ENCODE measurements at regions of chr11 and their contacts with region 1.

Region 1: DNA sequence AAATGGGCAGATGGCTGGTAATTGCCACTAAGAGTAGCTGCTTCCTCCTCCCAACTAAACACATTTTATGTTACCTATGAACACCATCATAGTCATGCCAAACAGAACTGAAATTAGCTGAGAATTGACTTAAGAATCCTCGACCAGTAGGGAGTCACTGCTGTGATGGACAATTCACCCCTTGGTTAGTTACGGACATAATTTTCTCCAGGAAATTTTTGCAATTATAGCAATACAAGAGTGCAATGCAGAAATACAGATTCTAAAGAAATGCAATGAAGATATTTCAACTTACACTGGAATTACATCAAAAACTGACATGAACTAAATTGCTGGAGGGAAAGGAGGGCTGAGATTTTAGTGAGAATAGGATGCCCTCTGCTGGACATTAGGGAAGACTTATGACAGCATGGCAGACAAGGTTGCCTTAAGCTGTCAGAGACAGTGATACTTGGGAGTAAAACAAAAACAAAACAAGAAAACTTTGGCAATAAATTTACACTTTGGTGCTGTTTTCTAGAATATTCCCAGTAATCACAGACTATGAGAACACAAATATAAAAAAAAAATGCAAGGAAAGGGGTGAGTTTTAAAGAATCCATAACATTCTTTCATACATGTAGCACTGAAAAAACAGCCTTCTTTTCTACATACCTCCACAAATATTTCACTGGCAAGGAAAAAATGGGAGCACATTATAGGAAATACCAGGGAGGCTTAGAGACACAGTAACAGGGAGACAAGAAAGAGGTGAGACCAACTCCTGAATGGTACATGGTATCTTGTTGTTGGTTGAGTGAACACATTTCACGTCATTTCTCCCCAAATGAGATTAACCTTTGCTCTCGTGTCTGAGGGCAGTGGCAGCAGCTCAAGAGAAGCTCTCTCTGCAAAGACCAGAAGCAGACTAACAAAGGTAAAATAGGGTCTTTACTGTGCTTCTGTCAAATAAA is 11.2 kb upstream of the PPP2R1B start:
- DNase-seq: peak; percentile 79
- H3K4me3 Mint-ChIP-seq: no peak overlapping the region
- H3K27ac Mint-ChIP-seq: no peak overlapping the region
- H3K4me1 Mint-ChIP-seq: no peaks in the 10 kb centered on the region
- H3K27me3 Mint-ChIP-seq: no peaks in the 10 kb centered on the region
- CTCF ChIP-seq: peak; percentile 54

Region 2: DNA sequence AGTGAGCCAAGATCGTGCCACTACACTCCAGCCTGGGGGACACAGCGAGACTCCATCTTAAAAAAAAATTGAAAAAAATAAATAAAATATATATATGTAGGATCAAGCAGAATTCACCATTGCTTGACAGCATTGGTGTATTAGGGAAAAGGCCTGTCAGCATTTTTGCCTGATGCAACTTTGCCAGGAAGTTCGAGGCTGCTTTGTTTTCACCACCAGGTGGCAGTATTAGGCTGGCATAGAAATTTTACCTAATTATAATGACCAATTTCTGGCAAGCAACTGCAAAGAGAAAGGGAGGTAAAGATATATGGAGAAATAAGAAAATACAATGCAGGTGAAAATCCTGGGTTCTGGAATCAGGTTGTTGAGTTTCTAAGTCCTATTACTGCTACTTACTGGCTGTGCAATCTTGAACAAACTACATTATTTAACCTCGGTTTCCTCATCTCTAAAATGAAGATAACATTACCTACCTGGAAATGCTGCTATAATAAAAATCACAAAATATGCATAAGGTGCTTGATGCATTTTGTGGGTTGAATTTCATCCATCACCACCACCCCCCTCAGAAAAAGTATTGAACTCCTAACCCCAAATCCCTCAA is 212.2 kb before region 1 on chr11:
- CTCF ChIA-PET with region 1: interaction called, 17 read pairs
- POLR2A ChIA-PET with region 1: interaction called, 4 read pairs
- intact Hi-C with region 1: loop called (anchors 1 kb)
- DNase-seq: peak; percentile 75
- H3K4me3 Mint-ChIP-seq: no peak overlapping the region
- H3K27ac Mint-ChIP-seq: no peak overlapping the region
- H3K4me1 Mint-ChIP-seq: peaks cover 13% of the 10 kb centered on the region
- H3K27me3 Mint-ChIP-seq: no peaks in the 10 kb centered on the region
- CTCF ChIP-seq: peak; percentile 70

Region 3: DNA sequence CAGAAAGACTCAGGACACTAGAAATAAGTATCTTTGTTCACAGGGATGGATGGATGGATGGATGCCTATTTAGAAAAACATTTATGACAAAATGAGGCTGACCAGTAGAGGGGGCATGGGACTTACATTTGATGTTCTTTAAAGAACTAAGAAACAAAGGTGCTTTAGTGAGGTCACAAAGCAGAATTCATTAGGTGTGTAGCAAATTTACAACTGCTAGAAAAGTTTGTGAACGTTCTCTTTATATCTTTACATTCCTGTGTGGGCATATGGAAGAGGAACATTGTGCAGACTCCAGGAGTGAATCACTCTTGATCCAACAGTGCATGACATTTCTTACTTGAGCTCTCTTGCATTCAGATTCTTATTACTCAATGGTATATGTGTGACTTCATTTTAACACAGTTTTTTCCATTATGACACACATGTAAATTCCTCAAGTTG is 191.0 kb before region 1 on chr11:
- CTCF ChIA-PET with region 1: interaction called, 26 read pairs
- POLR2A ChIA-PET with region 1: interaction called, 4 read pairs
- intact Hi-C with region 1: loop called (anchors 1 kb)
- DNase-seq: peak; percentile 55
- H3K4me3 Mint-ChIP-seq: no peak overlapping the region
- H3K27ac Mint-ChIP-seq: no peak overlapping the region
- H3K4me1 Mint-ChIP-seq: no peaks in the 10 kb centered on the region
- H3K27me3 Mint-ChIP-seq: no peaks in the 10 kb centered on the region
- CTCF ChIP-seq: peak; percentile 40

Region 4: DNA sequence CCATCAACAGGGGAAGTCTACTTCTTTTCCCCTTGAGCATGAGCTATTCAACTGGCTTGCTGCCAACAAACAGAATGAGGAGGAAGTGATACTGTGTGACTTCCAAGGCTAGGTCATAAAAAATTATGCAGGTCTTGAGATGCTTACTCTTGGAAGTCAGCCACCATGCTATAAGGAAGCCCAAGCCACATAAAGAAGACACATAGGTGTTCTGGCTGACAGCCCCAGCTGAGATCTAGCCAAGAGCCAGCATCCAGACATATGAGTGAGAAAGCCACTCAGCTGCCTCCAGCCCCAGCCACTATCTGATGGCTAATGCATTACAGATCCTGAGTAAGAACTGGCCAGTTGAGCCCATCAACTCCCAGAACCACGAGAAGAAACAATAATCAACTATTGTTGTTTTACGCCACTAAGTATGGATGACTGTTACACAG is 19.8 kb after region 1 on chr11:
- CTCF ChIA-PET with region 1: interaction called, 55 read pairs
- POLR2A ChIA-PET with region 1: interaction called, 3 read pairs
- intact Hi-C with region 1: no loop called
- DNase-seq: peak; percentile 43
- H3K4me3 Mint-ChIP-seq: no peak overlapping the region
- H3K27ac Mint-ChIP-seq: no peak overlapping the region
- H3K4me1 Mint-ChIP-seq: peaks cover 15% of the 10 kb centered on the region
- H3K27me3 Mint-ChIP-seq: no peaks in the 10 kb centered on the region
- CTCF ChIP-seq: no peak

Region 5: GRCh38 chr11:111841370-111842053 is 64.1 kb after region 1 on chr11:
- CTCF ChIA-PET with region 1: interaction called, 7 read pairs
- POLR2A ChIA-PET with region 1: interaction called, 4 read pairs
- intact Hi-C with region 1: loop called (anchors 2 kb)
- DNase-seq: peak; percentile 82
- H3K4me3 Mint-ChIP-seq: no peak overlapping the region
- H3K27ac Mint-ChIP-seq: no peak overlapping the region
- H3K4me1 Mint-ChIP-seq: no peaks in the 10 kb centered on the region
- H3K27me3 Mint-ChIP-seq: no peaks in the 10 kb centered on the region
- CTCF ChIP-seq: peak; percentile 79

Region 6: GRCh38 chr11:111926505-111927391 is 149.4 kb after region 1 on chr11:
- CTCF ChIA-PET with region 1: no interaction called
- POLR2A ChIA-PET with region 1: no interaction called
- intact Hi-C with region 1: no loop called
- DNase-seq: peak; percentile 95
- H3K4me3 Mint-ChIP-seq: peak overlapping the region; percentile 73
- H3K27ac Mint-ChIP-seq: peak overlapping the region; percentile 66
- H3K4me1 Mint-ChIP-seq: peaks cover 22% of the 10 kb centered on the region
- H3K27me3 Mint-ChIP-seq: no peaks in the 10 kb centered on the region
- CTCF ChIP-seq: no peak

Measured in MCF 10A (cell line).